ENCODE measurements at regions of chr1 and their contacts with region 1.

Region 1: DNA sequence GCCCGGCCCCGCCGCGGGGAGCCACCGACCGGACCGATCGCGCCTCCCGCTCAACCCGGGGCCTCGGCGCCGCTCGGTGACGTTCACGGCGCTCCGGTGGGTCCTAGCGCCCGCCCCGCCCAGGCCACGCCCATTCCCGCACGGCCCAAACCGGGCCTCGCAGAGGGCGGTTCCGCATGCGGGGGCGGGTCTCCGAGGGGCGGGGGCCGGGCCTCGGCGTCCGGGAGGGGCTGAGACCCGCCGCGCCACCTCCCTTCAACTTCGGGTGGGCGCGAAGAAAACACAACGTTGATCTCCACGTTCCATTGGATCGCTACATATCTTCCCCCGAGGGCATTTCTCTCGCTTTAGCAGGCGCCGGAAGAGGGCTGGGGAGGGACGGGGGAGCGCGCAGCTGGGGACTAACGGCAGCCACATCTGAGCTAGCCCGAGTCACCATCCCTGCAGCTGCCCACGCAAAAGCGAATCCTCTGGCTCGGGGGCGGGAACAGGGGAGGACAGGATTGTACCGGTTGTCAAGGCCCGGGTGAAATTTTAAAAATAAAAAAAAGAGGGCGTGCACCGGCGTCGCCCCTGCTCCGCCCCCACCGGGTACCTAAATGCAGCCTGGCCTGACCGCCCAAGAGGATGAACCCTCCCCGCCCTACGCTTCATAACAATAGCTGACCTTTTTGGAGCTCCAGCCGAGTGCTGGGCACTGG is at the start of gene MAD2L2:
- DNase-seq: peak; percentile 75 to 93 (median 91)
- ATAC-seq: peak; percentile 91
- H3K4me3 ChIP-seq: peak within 1 kb of the TSS; percentile 91 to 95
- H3K4me3 Mint-ChIP-seq: peak within 1 kb of the TSS; percentile 89
- H3K27ac ChIP-seq: peak within 1 kb of the TSS; percentile 54 to 69
- H3K27ac Mint-ChIP-seq: peak within 1 kb of the TSS; percentile 91
- H3K4me1 ChIP-seq: peaks cover 14% of the 10 kb centered on the region
- H3K4me1 Mint-ChIP-seq: peaks cover 18% of the 10 kb centered on the region
- H3K27me3 ChIP-seq: peaks cover 0 to 2% of the 10 kb centered on the region in 2 experiments
- H3K27me3 Mint-ChIP-seq: peaks cover 4% of the 10 kb centered on the region
- CTCF ChIP-seq: no peak
- total RNA-seq, gene MAD2L2: 28.7 to 29.4 TPM

Region 2: GRCh38 chr1:11654137-11654938 is 26.9 kb before region 1 on chr1 and contains the starts of genes FBXO2 and FBXO44:
- CTCF ChIA-PET with region 1: interaction called, 6 read pairs
- POLR2A ChIA-PET with region 1: interaction called, 4 read pairs
- intact Hi-C with region 1: loop called (anchors 2 kb)
- DNase-seq: peak; percentile 32 to 77 (median 66)
- ATAC-seq: peak; percentile 78
- H3K4me3 ChIP-seq: peak within 1 kb of the TSS; percentile 59 to 66
- H3K4me3 Mint-ChIP-seq: peak within 1 kb of the TSS; percentile 77
- H3K27ac ChIP-seq: peak within 1 kb of the TSS in 1 of 2 experiments; percentile 42
- H3K27ac Mint-ChIP-seq: no peak within 1 kb of the TSS
- H3K4me1 ChIP-seq: peaks cover 32% of the 10 kb centered on the region
- H3K4me1 Mint-ChIP-seq: peaks cover 33% of the 10 kb centered on the region
- H3K27me3 ChIP-seq: no peaks in the 10 kb centered on the region
- H3K27me3 Mint-ChIP-seq: no peaks in the 10 kb centered on the region
- CTCF ChIP-seq: no peak
- total RNA-seq, gene FBXO2: 3.4 to 3.5 TPM
- total RNA-seq, gene FBXO44: 35.9 to 36.0 TPM

Region 3: GRCh38 chr1:11661103-11661502 is 20.1 kb before region 1 on chr1:
- CTCF ChIA-PET with region 1: interaction called, 24 read pairs
- POLR2A ChIA-PET with region 1: interaction called, 22 read pairs
- intact Hi-C with region 1: loop called (anchors 1 kb)
- DNase-seq: no peak
- ATAC-seq: no peak
- H3K4me3 ChIP-seq: no peak overlapping the region
- H3K4me3 Mint-ChIP-seq: no peak overlapping the region
- H3K27ac ChIP-seq: no peak overlapping the region
- H3K27ac Mint-ChIP-seq: no peak overlapping the region
- H3K4me1 ChIP-seq: peaks cover 6% of the 10 kb centered on the region
- H3K4me1 Mint-ChIP-seq: peaks cover 5% of the 10 kb centered on the region
- H3K27me3 ChIP-seq: no peaks in the 10 kb centered on the region
- H3K27me3 Mint-ChIP-seq: no peaks in the 10 kb centered on the region
- CTCF ChIP-seq: no peak

Measured in CD8-positive, alpha-beta T cell (primary cell).